ENCODE measurements at regions of chr15 and their contacts with region 1.

Region 1: GRCh38 chr15:99708556-99708955 is 24.7 kb downstream of the LYSMD4 start:
- DNase-seq: peak; percentile 57 to 76
- ATAC-seq: peak; percentile 93

Region 2: GRCh38 chr15:99282121-99282520 is 426.4 kb before region 1 on chr15:
- intact Hi-C with region 1: loop called in 1 of 2 experiments (anchors 5 kb)
- DNase-seq: no peak
- ATAC-seq: peak; percentile 61

Measured in left colon (tissue), 2 donors.